ENCODE measurements at regions of chr11 and their contacts with region 1.

Region 1: DNA sequence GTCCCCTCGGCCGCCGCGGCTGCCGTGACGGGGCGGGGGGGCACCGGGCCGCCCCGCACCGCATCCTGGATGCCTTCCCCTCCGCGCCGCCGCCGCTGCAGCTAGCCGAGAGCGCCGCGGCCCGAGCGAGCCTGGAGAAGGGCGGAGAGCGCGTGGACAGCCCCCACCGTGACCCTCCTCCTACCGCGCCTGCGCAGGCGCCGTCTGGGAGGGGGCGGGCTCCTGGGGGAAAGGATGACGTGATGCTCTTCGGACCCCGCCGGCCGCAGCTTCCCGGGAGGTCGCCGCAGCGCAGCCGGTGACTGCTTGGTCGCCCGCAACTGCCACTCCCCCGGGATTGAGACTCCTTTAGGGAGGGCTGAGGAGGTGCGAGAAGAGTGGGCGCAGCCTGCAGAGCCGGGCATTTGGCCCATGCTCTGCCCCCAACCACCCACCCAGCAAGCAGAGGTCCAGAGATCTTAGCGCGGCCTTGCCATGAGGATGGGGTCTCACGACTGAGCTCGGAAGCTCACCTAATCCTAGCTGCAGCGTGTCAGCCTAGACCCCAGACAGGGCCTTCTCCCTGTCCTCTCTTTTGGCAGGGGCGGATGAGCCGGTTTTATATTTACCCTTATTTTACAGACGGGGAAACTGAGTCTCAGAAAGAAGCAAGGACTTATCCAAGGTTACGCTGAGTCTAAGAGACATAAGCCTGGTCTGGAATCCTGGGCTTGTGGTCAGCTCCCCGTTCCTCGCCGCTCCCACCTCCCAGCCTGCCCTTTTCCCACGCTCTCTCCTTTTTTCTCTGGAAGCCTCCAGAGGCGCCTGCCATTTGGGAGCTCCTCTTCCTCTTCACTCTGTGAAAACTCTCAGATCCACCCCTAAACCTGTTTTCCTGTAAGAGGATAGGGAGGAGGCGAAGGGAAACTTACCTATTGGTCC is at the start of gene DENND5A:
- DNase-seq: peak; percentile 83 to 89 (median 88)
- H3K4me3 ChIP-seq: peak within 1 kb of the TSS; percentile 89 to 97 (median 94)
- H3K27ac ChIP-seq: peak within 1 kb of the TSS; percentile 83 to 96
- H3K4me1 ChIP-seq: peaks cover 4 to 37% (median 26%) of the 10 kb centered on the region in 4 experiments
- H3K27me3 ChIP-seq: no peaks in the 10 kb centered on the region

Region 2: GRCh38 chr11:9200471-9200870 is 65.0 kb before region 1 on chr11:
- CTCF ChIA-PET with region 1: no interaction called
- POLR2A ChIA-PET with region 1: no interaction called
- DNase-seq: no peak
- H3K4me3 ChIP-seq: no peak overlapping the region
- H3K27ac ChIP-seq: no peak overlapping the region
- H3K4me1 ChIP-seq: no peaks in the 10 kb centered on the region
- H3K27me3 ChIP-seq: no peaks in the 10 kb centered on the region

Region 3: GRCh38 chr11:9280655-9281301 is 15.3 kb after region 1 on chr11:
- CTCF ChIA-PET with region 1: interaction called, 3 read pairs
- POLR2A ChIA-PET with region 1: interaction called, 11 read pairs
- DNase-seq: peak; percentile 89 to 97 (median 95)
- H3K4me3 ChIP-seq: peak overlapping the region in 5 of 7 experiments; percentile 1 to 51 (median 12)
- H3K27ac ChIP-seq: no peak overlapping the region
- H3K4me1 ChIP-seq: peaks cover 1 to 15% (median 13%) of the 10 kb centered on the region in 4 experiments
- H3K27me3 ChIP-seq: no peaks in the 10 kb centered on the region

Region 4: DNA sequence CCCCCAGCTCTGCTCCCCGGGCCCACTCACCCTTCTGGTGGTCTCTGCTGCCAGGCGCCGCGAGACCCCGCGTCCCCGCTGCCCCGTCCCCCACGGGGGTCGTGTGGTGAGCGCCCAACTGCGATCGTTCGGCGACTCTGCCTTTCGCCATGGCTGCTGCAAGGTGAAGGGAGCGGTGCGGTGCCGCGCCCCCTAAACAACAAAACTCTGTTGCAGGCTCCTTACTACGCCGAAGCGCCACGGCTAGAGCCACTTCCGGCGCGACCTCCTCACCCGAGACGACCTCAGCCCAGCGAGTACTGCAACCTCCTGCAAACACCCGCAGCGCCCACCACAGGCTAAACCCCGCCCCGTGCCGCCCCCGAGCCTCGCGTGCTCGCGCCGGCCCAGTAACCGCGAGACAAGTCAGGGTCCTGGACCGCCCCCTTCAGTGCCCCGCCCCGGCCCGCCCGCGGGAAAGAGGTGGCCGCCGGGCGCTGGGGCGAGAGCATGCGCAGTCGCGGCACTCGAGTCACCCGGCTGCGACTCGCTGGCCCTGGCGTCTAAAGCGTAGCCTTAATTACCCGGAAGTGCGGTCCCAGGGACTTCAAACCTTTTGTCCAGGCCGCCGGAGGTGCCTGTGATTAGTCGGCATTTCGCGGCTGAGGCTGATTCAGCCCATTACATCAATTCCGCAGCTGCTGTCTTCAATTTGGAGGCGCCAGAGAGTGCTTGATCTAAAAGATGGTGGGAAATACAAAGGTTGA is 49.0 kb after region 1 on chr11 and contains the start of gene TMEM41B:
- CTCF ChIA-PET with region 1: no interaction called
- POLR2A ChIA-PET with region 1: interaction called, 10 read pairs
- DNase-seq: peak; percentile 96 to 99 (median 98)
- H3K4me3 ChIP-seq: peak within 1 kb of the TSS; percentile 81 to 99 (median 85)
- H3K27ac ChIP-seq: peak within 1 kb of the TSS; percentile 87 to 95
- H3K4me1 ChIP-seq: peaks cover 6 to 30% (median 26%) of the 10 kb centered on the region in 4 experiments
- H3K27me3 ChIP-seq: no peaks in the 10 kb centered on the region

Region 5: DNA sequence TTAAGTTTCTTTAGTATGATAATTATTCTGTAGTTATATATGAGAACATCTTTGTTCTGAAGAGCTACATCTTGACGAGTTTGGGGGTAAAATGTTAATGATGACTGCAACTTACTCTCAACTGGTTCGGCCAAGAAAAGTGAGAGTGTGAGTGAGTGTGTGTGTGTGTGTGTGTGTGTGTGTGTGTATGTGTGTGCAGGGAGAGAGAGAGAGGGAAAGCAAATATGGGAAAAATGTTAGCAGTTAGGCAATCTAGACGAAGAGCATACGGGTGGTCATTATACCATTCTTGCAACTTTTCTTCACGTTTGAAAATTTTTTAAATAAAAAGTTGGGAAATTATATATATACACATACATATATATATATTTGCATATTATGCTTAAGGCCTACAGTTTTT is 67.2 kb after region 1 on chr11:
- CTCF ChIA-PET with region 1: no interaction called
- POLR2A ChIA-PET with region 1: no interaction called
- DNase-seq: no peak
- H3K4me3 ChIP-seq: no peak overlapping the region
- H3K27ac ChIP-seq: no peak overlapping the region
- H3K4me1 ChIP-seq: peaks cover 0 to 6% (median 0%) of the 10 kb centered on the region in 4 experiments
- H3K27me3 ChIP-seq: no peaks in the 10 kb centered on the region

Region 6: GRCh38 chr11:9613118-9613829 is 347.8 kb after region 1 on chr11:
- CTCF ChIA-PET with region 1: no interaction called
- POLR2A ChIA-PET with region 1: no interaction called
- DNase-seq: peak; percentile 86 to 89 (median 89)
- H3K4me3 ChIP-seq: peak overlapping the region; percentile 42 to 82 (median 69)
- H3K27ac ChIP-seq: peak overlapping the region; percentile 64 to 86
- H3K4me1 ChIP-seq: peaks cover 14 to 38% (median 28%) of the 10 kb centered on the region in 4 experiments
- H3K27me3 ChIP-seq: no peaks in the 10 kb centered on the region

Measured in common myeloid progenitor, CD34-positive (primary cell).